GM10248 (cell line): ENCODE measurements at regions of chrX and their contacts with region 1.

Region 1: GRCh38 chrX:130060122-130061069 is 49.9 kb downstream of the ELF4 start:
- DNase-seq: peak; percentile 91
- CTCF ChIP-seq: peak; percentile 77

Region 2: DNA sequence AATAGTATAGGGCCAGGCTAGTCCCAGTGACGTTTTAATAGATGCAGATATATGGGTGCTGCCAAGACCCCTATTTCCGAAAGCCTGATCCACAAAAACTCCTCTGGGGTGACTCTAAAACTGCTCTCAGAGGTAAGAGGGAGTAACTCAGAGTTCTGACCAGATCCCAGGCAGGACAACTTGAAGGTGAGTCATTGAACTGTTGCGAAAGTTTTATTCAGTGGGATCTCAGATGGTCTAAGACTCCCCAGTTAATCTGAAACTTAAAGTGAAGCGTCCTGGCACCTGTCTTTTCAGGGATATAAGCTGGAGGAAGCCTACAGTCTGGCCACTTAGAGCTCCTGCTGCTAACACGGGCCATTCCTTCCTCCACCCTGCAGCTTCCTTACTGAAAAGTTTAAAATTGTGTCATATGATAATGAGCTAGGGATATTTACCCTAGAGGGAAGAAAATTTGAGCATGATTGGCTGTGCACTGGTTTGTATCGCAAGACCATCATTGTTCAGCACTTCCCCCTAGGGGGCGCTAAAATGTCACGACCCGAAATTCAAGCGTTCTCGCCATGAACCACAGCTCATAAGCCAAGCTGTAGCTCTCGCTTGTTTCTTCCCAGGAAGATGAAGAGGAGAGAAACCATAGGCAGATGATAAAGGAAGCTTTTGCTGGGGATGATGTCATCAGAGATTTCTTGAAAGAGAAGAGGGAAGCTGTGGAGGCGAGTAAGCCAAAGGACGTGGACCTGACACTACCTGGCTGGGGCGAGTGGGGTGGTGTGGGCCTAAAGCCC is 134.9 kb before region 1 on chrX:
- CTCF ChIA-PET with region 1: interaction called, 62 read pairs
- POLR2A ChIA-PET with region 1: no interaction called
- DNase-seq: peak; percentile 57
- CTCF ChIP-seq: peak; percentile 53

Region 3: GRCh38 chrX:129961180-129962083 is 99.0 kb before region 1 on chrX:
- CTCF ChIA-PET with region 1: interaction called, 10 read pairs
- POLR2A ChIA-PET with region 1: no interaction called
- DNase-seq: peak; percentile 84
- CTCF ChIP-seq: no peak

Region 4: GRCh38 chrX:130005089-130005807 is 55.1 kb before region 1 on chrX:
- CTCF ChIA-PET with region 1: no interaction called
- POLR2A ChIA-PET with region 1: no interaction called
- DNase-seq: no peak
- CTCF ChIP-seq: no peak